Breast epithelium (tissue), 4 donors: ENCODE measurements at regions of chr20 and their contacts with region 1.

Region 1: GRCh38 chr20:52349806-52350205 is 158.2 kb upstream of the ZFP64 start:
- DNase-seq: no peak
- H3K4me3 ChIP-seq: no peak overlapping the region
- H3K27ac ChIP-seq: no peak overlapping the region
- H3K4me1 ChIP-seq: no peaks in the 10 kb centered on the region
- H3K27me3 ChIP-seq: no peaks in the 10 kb centered on the region
- CTCF ChIP-seq: no peak
- POLR2A ChIP-seq: no peak

Region 2: DNA sequence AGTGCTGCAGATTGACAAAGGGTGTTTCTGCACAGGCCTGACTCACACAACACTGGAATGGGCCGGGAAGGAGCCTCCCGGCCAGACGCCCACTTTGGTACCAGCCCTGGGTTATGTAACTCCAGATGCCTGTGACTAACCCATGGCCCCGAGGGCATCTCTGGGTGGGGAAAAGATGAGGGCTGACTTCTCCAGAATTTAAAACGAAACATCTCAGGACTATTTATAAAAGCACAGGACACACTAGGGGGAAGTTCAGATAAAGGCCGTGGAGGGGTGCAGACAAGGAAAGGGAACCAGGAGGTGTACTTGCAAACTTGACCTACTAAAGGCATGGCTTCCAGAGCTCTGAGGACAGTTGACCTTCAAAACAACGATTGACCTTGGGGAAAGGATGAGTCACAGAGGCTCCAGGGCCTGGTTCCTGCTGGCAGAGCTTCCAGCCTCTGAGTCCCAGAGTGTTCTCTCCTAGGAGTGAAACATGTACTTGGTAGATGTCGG is 1004.2 kb before region 1 on chr20:
- intact Hi-C with region 1: loop called (anchors 5 kb)
- DNase-seq: no peak
- H3K4me3 ChIP-seq: no peak overlapping the region
- H3K27ac ChIP-seq: no peak overlapping the region
- H3K4me1 ChIP-seq: no peaks in the 10 kb centered on the region
- H3K27me3 ChIP-seq: no peaks in the 10 kb centered on the region
- CTCF ChIP-seq: no peak
- POLR2A ChIP-seq: no peak

Region 3: DNA sequence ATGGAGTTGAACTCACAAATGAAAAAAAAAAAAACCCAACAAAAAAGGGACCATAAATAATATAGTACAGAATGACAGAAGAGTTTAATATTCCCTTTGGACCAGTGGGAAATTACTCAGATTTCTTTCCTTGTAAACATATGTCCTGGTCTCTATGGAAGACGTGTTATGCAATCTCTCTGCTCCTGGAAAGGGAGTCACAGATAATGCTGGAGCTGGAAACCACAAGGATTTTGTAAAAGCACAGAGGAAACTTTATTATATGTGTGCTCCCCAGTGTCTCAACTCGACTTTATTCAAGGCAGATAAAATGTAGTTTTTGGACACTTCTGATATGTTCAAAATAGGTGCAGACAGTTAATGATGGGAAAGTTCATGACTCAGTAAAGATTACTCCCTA is 70.1 kb before region 1 on chr20:
- intact Hi-C with region 1: loop called (anchors 2 kb)
- DNase-seq: no peak
- H3K4me3 ChIP-seq: no peak overlapping the region
- H3K27ac ChIP-seq: no peak overlapping the region
- H3K4me1 ChIP-seq: no peaks in the 10 kb centered on the region
- H3K27me3 ChIP-seq: no peaks in the 10 kb centered on the region
- CTCF ChIP-seq: no peak
- POLR2A ChIP-seq: no peak

Region 4: GRCh38 chr20:52332230-52332629 is 17.6 kb before region 1 on chr20:
- intact Hi-C with region 1: no loop called
- DNase-seq: no peak
- H3K4me3 ChIP-seq: no peak overlapping the region
- H3K27ac ChIP-seq: no peak overlapping the region
- H3K4me1 ChIP-seq: no peaks in the 10 kb centered on the region
- H3K27me3 ChIP-seq: no peaks in the 10 kb centered on the region
- CTCF ChIP-seq: no peak
- POLR2A ChIP-seq: no peak